IMR-90 (cell line): ENCODE measurements at regions of chr10 and their contacts with region 1.

Region 1: GRCh38 chr10:33330543-33331378 is 3.7 kb downstream of the NRP1 start:
- DNase-seq: peak; percentile 90
- ATAC-seq: peak; percentile 27
- H3K4me3 ChIP-seq: peak overlapping the region; percentile 85; the same call in 1 of the 2 replicates
- H3K27ac ChIP-seq: peak overlapping the region; percentile 35; the same call in 1 of the 2 replicates
- H3K4me1 ChIP-seq: peaks cover 8% of the 10 kb centered on the region; the same call in 1 of the 2 replicates
- H3K27me3 ChIP-seq: no peaks in the 10 kb centered on the region
- CTCF ChIP-seq: peak; percentile 92
- POLR2A ChIP-seq: no peak
- RAD21 ChIP-seq: peak; percentile 95

Region 2: GRCh38 chr10:33421789-33422462 is 91.2 kb after region 1 on chr10:
- CTCF ChIA-PET with region 1: no interaction called
- POLR2A ChIA-PET with region 1: no interaction called
- dilution Hi-C with region 1: no loop called
- in situ Hi-C with region 1: no loop called
- intact Hi-C with region 1: loop called (anchors 5 kb)
- DNase-seq: peak; percentile 93
- ATAC-seq: peak; percentile 100
- H3K4me3 ChIP-seq: no peak overlapping the region
- H3K27ac ChIP-seq: no peak overlapping the region
- H3K4me1 ChIP-seq: peaks cover 3% of the 10 kb centered on the region; the same call in 1 of the 2 replicates
- H3K27me3 ChIP-seq: no peaks in the 10 kb centered on the region
- CTCF ChIP-seq: no peak
- POLR2A ChIP-seq: no peak
- RAD21 ChIP-seq: no peak

Region 3: GRCh38 chr10:33524966-33525365 is 194.2 kb after region 1 on chr10:
- CTCF ChIA-PET with region 1: no interaction called
- POLR2A ChIA-PET with region 1: no interaction called
- dilution Hi-C with region 1: no loop called
- in situ Hi-C with region 1: no loop called
- intact Hi-C with region 1: loop called (anchors 5 kb)
- DNase-seq: peak; percentile 53
- ATAC-seq: peak; percentile 82
- H3K4me3 ChIP-seq: no peak overlapping the region
- H3K27ac ChIP-seq: no peak overlapping the region
- H3K4me1 ChIP-seq: peaks cover 2% of the 10 kb centered on the region; the same call in 1 of the 2 replicates
- H3K27me3 ChIP-seq: no peaks in the 10 kb centered on the region
- CTCF ChIP-seq: no peak
- POLR2A ChIP-seq: no peak
- RAD21 ChIP-seq: no peak

Region 4: GRCh38 chr10:33743429-33743857 is 412.7 kb after region 1 on chr10:
- CTCF ChIA-PET with region 1: no interaction called
- POLR2A ChIA-PET with region 1: no interaction called
- dilution Hi-C with region 1: no loop called
- in situ Hi-C with region 1: no loop called
- intact Hi-C with region 1: loop called (anchors 10 kb)
- DNase-seq: no peak
- ATAC-seq: no peak
- H3K4me3 ChIP-seq: no peak overlapping the region
- H3K27ac ChIP-seq: no peak overlapping the region
- H3K4me1 ChIP-seq: no peaks in the 10 kb centered on the region
- H3K27me3 ChIP-seq: peaks cover 3% of the 10 kb centered on the region; the same call in 1 of the 2 replicates
- CTCF ChIP-seq: no peak
- POLR2A ChIP-seq: no peak
- RAD21 ChIP-seq: no peak

Region 5: GRCh38 chr10:33993917-33994316 is 663.2 kb after region 1 on chr10:
- CTCF ChIA-PET with region 1: no interaction called
- POLR2A ChIA-PET with region 1: no interaction called
- dilution Hi-C with region 1: no loop called
- in situ Hi-C with region 1: no loop called
- intact Hi-C with region 1: loop called (anchors 10 kb)
- DNase-seq: no peak
- ATAC-seq: no peak
- H3K4me3 ChIP-seq: no peak overlapping the region
- H3K27ac ChIP-seq: no peak overlapping the region
- H3K4me1 ChIP-seq: peaks cover 1% of the 10 kb centered on the region; the same call in 1 of the 2 replicates
- H3K27me3 ChIP-seq: no peaks in the 10 kb centered on the region; the same call in 1 of the 2 replicates
- CTCF ChIP-seq: no peak
- POLR2A ChIP-seq: no peak
- RAD21 ChIP-seq: no peak

Region 6: GRCh38 chr10:34290412-34291081 is 959.8 kb after region 1 on chr10:
- CTCF ChIA-PET with region 1: no interaction called
- POLR2A ChIA-PET with region 1: no interaction called
- dilution Hi-C with region 1: no loop called
- in situ Hi-C with region 1: no loop called
- intact Hi-C with region 1: loop called (anchors 5 kb)
- DNase-seq: peak; percentile 87
- ATAC-seq: peak; percentile 87
- H3K4me3 ChIP-seq: no peak overlapping the region
- H3K27ac ChIP-seq: peak overlapping the region; percentile 74; the same call in 1 of the 2 replicates
- H3K4me1 ChIP-seq: peaks cover 14% of the 10 kb centered on the region
- H3K27me3 ChIP-seq: no peaks in the 10 kb centered on the region
- CTCF ChIP-seq: no peak
- POLR2A ChIP-seq: no peak
- RAD21 ChIP-seq: no peak

Region 7: GRCh38 chr10:34522546-34522945 is 1191.8 kb after region 1 on chr10:
- CTCF ChIA-PET with region 1: no interaction called
- POLR2A ChIA-PET with region 1: no interaction called
- dilution Hi-C with region 1: no loop called
- in situ Hi-C with region 1: no loop called
- intact Hi-C with region 1: loop called (anchors 5 kb)
- DNase-seq: peak; percentile 35
- ATAC-seq: 0 out of 2 replicates have a peak, but pooled peaks have one; percentile 28
- H3K4me3 ChIP-seq: no peak overlapping the region
- H3K27ac ChIP-seq: no peak overlapping the region
- H3K4me1 ChIP-seq: peaks cover 10% of the 10 kb centered on the region
- H3K27me3 ChIP-seq: no peaks in the 10 kb centered on the region
- CTCF ChIP-seq: peak; percentile 59
- POLR2A ChIP-seq: no peak
- RAD21 ChIP-seq: peak; percentile 52